Common myeloid progenitor, CD34-positive (primary cell): ENCODE measurements at regions of chr6 and their contacts with region 1.

Region 1: GRCh38 chr6:30541515-30542403 is 14.5 kb downstream of the GNL1 start:
- DNase-seq: peak; percentile 86 to 93 (median 92)
- H3K4me3 ChIP-seq: peak overlapping the region; percentile 31 to 84 (median 66)
- H3K27ac ChIP-seq: no peak overlapping the region
- H3K4me1 ChIP-seq: peaks cover 8 to 20% (median 15%) of the 10 kb centered on the region in 4 experiments
- H3K27me3 ChIP-seq: no peaks in the 10 kb centered on the region

Region 2: DNA sequence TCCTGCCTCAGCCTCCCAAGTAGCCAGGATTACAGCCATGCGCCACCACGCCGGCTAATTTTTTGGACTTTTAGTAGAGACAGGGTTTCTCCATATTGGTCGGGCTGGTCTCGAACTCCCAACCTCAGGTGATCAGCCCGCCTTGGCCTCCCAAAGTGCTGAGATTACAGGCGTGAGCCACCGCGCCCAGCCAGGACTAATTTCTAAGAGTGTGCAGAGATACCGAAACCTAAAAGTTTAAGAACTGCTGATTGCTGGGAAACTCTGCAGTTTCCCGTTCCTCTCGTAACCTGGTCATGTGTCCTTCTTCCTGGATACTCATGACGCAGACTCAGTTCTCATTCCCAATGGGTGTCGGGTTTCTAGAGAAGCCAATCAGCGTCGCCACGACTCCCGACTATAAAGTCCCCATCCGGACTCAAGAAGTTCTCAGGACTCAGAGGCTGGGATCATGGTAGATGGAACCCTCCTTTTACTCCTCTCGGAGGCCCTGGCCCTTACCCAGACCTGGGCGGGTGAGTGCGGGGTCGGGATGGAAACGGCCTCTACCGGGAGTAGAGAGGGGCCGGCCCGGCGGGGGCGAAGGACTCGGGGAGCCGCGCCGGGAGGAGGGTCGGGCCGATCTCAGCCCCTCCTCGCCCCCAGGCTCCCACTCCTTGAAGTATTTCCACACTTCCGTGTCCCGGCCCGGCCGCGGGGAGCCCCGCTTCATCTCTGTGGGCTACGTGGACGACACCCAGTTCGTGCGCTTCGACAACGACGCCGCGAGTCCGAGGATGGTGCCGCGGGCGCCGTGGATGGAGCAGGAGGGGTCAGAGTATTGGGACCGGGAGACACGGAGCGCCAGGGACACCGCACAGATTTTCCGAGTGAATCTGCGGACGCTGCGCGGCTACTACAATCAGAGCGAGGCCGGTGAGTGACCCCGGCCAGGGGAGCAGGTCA is 52.4 kb before region 1 on chr6 and contains the start of gene HLA-E:
- CTCF ChIA-PET with region 1: interaction called, 259 read pairs
- POLR2A ChIA-PET with region 1: interaction called, 5 read pairs
- DNase-seq: peak; percentile 99 to 100 (median 100)
- H3K4me3 ChIP-seq: peak within 1 kb of the TSS; percentile 95 to 100 (median 98)
- H3K27ac ChIP-seq: peak within 1 kb of the TSS; percentile 89 to 93
- H3K4me1 ChIP-seq: peaks cover 10 to 41% (median 29%) of the 10 kb centered on the region in 4 experiments
- H3K27me3 ChIP-seq: no peaks in the 10 kb centered on the region

Region 3: DNA sequence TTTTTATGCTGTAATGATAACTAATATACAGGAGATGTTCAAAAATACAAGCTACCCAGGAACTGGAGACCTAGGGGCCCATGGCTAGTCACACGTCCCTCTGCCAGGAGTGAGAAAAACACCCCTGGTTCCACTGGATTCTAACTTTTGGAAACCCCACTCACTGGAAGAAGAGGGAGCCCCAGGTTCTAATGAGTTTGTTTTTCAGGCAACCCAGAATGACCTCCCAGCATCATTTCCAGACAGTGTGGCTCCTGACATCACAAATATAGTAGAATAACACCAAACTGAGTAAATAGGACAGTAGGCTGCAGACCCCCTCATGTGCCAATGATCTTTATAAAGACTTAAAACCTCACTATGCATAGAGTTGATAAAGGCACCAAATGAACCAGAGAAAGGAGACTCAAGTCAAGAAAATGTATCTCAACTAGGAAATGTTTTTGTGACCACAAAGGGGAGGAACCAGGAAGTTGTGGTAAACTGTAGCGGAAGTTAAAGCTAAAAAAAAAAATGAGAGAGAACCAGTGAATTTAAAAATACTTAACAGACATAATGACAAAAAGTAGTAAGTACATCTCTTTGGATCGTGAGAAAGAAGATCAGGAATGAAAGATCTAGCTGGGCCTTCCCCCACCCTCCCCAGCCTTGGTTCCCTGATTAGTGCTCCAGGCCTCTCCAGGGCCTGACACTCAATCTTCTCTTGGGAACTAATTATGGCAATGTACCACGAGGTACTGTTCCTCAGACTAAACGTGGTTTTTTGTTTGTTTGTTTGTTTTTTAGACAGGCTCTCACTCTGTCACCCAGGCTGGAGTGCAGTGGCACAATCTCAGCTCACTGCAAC is 32.6 kb before region 1 on chr6:
- CTCF ChIA-PET with region 1: interaction called, 25 read pairs
- POLR2A ChIA-PET with region 1: interaction called, 4 read pairs
- DNase-seq: peak; percentile 84 to 94 (median 91)
- H3K4me3 ChIP-seq: peak overlapping the region in 6 of 7 experiments; percentile 16 to 72 (median 42)
- H3K27ac ChIP-seq: peak overlapping the region; percentile 17 to 64
- H3K4me1 ChIP-seq: peaks cover 35 to 74% (median 48%) of the 10 kb centered on the region in 4 experiments
- H3K27me3 ChIP-seq: no peaks in the 10 kb centered on the region

Region 4: DNA sequence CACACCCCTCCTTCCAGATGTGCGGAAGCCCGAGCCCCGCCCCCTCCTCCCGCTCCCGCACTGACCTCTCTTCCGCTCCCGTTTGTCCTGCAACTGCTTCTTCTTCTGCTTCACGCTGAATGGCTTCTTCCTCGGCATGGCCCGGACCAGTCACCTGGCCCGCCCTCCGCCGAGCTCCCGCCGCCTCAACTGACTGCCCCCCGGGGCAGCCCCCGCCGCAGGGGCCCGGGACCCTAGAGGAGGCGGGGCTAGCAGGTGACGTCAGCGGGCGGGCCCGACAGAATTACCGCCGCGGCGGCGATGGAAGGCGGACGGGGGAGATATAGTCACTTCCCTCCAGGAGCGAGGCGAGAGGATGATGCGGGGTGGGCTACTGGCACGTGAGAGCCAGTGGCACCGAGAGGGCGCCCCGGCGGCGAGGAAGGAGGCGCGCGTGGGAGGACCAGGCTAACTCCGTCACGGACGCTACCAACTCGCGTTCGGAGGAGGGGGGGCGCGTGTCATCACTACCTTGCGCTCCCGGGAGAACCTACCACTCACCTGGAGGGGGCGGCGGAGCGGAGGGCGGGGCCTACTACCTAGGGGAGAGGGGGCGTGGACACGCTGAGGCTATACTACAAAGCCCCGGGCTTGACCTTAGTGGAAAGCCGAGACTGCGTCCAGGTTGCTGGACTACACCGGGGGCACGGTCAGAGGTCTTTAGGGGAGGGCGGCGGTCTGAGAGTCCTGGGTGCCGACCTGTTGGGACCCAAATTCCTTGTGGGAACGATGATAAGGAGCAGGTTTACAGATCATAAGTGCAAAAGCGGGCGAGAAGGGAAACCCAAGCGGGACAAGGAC is 14.5 kb after region 1 on chr6 and contains the start of gene GNL1:
- CTCF ChIA-PET with region 1: interaction called, 99 read pairs
- POLR2A ChIA-PET with region 1: interaction called, 5 read pairs
- DNase-seq: peak; percentile 96 to 98 (median 97)
- H3K4me3 ChIP-seq: peak within 1 kb of the TSS; percentile 86 to 95 (median 89)
- H3K27ac ChIP-seq: peak within 1 kb of the TSS; percentile 88 to 93
- H3K4me1 ChIP-seq: peaks cover 8 to 30% (median 23%) of the 10 kb centered on the region in 4 experiments
- H3K27me3 ChIP-seq: no peaks in the 10 kb centered on the region

Region 5: GRCh38 chr6:30590994-30591393 is 49.2 kb after region 1 on chr6:
- CTCF ChIA-PET with region 1: interaction called, 20 read pairs
- POLR2A ChIA-PET with region 1: no interaction called
- DNase-seq: peak in 2 of 3 donors; percentile 23 to 33
- H3K4me3 ChIP-seq: no peak overlapping the region
- H3K27ac ChIP-seq: peak overlapping the region in 1 of 2 experiments; percentile 27
- H3K4me1 ChIP-seq: no peaks in the 10 kb centered on the region
- H3K27me3 ChIP-seq: no peaks in the 10 kb centered on the region

Region 6: GRCh38 chr6:31271641-31272357 is 730.0 kb after region 1 on chr6 and contains the start of gene HLA-C:
- CTCF ChIA-PET with region 1: no interaction called
- POLR2A ChIA-PET with region 1: no interaction called
- DNase-seq: peak; percentile 95 to 98 (median 97)
- H3K4me3 ChIP-seq: peak within 1 kb of the TSS; percentile 72 to 89 (median 78)
- H3K27ac ChIP-seq: peak within 1 kb of the TSS; percentile 85 to 94
- H3K4me1 ChIP-seq: peaks cover 0 to 30% (median 15%) of the 10 kb centered on the region in 4 experiments
- H3K27me3 ChIP-seq: no peaks in the 10 kb centered on the region